ENCODE measurements at regions of chr11 and their contacts with region 1.

Region 1: DNA sequence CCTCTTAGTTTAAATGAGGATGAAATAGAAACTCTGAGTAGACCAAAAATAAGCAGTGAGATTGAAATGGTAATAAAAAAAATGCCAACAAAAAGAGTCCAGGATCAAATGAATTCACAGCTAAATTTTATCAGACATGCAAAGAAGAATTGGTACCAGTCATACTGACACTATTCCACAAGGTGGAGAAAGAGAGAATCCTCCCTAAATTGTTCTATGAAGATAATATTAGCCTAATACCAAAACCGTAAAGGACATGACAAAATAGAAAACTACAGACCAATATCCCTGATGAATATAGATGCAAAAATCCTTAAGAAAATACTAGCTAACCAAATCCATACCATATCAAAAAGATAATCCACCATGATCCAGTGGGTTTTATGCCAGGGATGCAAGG is 169.8 kb upstream of the CHORDC1 start:
- H3K4me3 Mint-ChIP-seq: no peak overlapping the region
- H3K27ac Mint-ChIP-seq: no peak overlapping the region
- H3K4me1 Mint-ChIP-seq: no peaks in the 10 kb centered on the region
- H3K27me3 Mint-ChIP-seq: no peaks in the 10 kb centered on the region

Region 2: GRCh38 chr11:90414221-90414620 is 21.5 kb after region 1 on chr11:
- intact Hi-C with region 1: loop called (anchors 2 kb)
- H3K4me3 Mint-ChIP-seq: no peak overlapping the region
- H3K27ac Mint-ChIP-seq: no peak overlapping the region
- H3K4me1 Mint-ChIP-seq: no peaks in the 10 kb centered on the region
- H3K27me3 Mint-ChIP-seq: no peaks in the 10 kb centered on the region

Measured in dendritic cell treated with granulocyte-macrophage colony-stimulating factor and Interleukin-4, amounts not matched to agents 40 ng/mL and 50 ng/mL, for 4 days (primary cell).